ENCODE measurements at regions of chr15 and their contacts with region 1.

Region 1: DNA sequence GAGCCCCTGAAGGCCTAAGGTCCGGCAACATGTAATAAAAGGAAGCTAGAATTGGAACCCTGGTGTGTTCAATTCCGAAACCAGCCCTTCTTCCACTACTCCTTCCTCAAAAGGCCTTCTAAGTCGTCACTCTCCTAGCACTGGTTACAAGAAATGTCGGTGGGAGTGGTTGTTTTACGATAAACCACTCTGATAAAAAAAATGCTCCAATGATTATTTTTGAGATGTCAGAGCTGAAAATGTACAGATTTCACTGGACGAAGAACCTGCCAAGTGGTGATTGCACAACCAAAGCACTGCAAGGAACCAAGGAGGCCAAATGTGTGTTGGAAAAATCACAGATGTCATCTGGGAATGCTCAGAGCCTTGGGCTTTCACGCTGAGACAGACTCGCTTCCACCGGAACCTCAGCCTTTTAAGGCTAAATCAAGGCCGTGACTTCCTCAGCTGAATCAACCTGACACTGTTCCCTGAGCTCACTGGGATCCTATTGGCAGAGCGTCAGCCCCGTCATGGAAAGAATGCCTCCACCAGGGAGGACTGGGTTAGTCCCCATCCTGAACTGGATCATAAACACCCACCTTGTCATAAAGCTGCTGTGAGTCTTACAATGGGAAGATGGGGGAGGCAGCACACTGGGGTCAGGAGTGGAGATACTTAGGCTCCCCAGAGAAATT is 108.1 kb upstream of the THBS1 start:
- DNase-seq: peak; percentile 99
- ATAC-seq: peak; percentile 93
- H3K4me3 ChIP-seq: no peak overlapping the region
- H3K27ac ChIP-seq: peak overlapping the region; percentile 99; the same call in 1 of the 2 replicates
- H3K4me1 ChIP-seq: peaks cover 15% of the 10 kb centered on the region; the same call in 1 of the 2 replicates
- H3K27me3 ChIP-seq: no peaks in the 10 kb centered on the region
- CTCF ChIP-seq: no peak
- POLR2A ChIP-seq: no peak
- RAD21 ChIP-seq: no peak

Region 2: GRCh38 chr15:38996111-38996631 is 476.6 kb before region 1 on chr15:
- CTCF ChIA-PET with region 1: no interaction called
- POLR2A ChIA-PET with region 1: no interaction called
- dilution Hi-C with region 1: no loop called
- in situ Hi-C with region 1: no loop called
- intact Hi-C with region 1: loop called (anchors 5 kb)
- DNase-seq: peak; percentile 90
- ATAC-seq: peak; percentile 74
- H3K4me3 ChIP-seq: no peak overlapping the region
- H3K27ac ChIP-seq: peak overlapping the region; percentile 99; the same call in 1 of the 2 replicates
- H3K4me1 ChIP-seq: peaks cover 28% of the 10 kb centered on the region
- H3K27me3 ChIP-seq: no peaks in the 10 kb centered on the region
- CTCF ChIP-seq: no peak
- POLR2A ChIP-seq: no peak
- RAD21 ChIP-seq: no peak

Region 3: GRCh38 chr15:39125904-39126303 is 346.9 kb before region 1 on chr15:
- CTCF ChIA-PET with region 1: no interaction called
- POLR2A ChIA-PET with region 1: no interaction called
- dilution Hi-C with region 1: no loop called
- in situ Hi-C with region 1: no loop called
- intact Hi-C with region 1: loop called (anchors 2 kb)
- DNase-seq: peak; percentile 68
- ATAC-seq: no peak
- H3K4me3 ChIP-seq: no peak overlapping the region
- H3K27ac ChIP-seq: peak overlapping the region; percentile 39; the same call in 1 of the 2 replicates
- H3K4me1 ChIP-seq: peaks cover 37% of the 10 kb centered on the region
- H3K27me3 ChIP-seq: no peaks in the 10 kb centered on the region
- CTCF ChIP-seq: peak; percentile 64
- POLR2A ChIP-seq: no peak
- RAD21 ChIP-seq: peak; percentile 62

Region 4: DNA sequence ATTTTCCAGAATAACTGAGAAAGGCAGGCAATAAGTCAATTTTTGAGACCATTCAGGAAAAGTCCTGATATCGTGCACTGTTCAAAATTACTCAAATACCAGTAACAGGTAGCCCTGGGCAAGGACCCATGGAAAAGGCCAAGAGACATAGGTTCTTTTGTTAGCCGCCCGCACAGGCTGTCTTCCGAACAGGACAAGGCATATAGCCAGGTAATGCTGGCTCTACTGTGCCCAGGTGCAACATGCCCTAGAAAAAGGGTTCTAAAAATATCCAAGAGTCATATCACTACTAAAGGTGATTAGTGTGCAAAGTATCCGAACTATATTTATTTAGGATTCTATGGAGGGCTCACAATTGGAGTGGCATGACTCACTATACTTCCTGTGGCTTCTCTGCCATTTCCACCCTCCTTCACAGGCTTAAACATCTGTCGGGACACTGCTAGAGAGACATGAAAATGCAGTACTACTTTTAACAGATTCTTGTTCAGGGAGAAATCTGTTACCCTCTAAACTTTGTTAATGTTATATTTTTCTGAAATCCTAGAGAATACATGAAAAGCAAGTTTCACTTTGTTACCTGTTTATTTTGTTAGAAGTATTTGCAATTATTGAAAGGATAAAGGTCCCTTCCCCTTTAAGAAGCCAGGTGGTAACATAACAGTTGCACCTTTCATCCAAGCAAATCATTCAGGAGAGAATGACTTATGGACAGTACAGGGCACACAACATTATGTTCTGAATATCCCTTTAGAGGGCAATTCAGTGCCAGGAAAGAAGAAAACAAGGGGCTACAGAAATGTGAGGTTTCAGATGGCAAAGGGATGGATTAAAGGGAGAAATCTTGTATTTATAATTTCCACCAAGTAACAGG is 185.2 kb before region 1 on chr15:
- CTCF ChIA-PET with region 1: no interaction called
- POLR2A ChIA-PET with region 1: no interaction called
- dilution Hi-C with region 1: no loop called
- in situ Hi-C with region 1: no loop called
- intact Hi-C with region 1: loop called (anchors 5 kb)
- DNase-seq: peak; percentile 73
- ATAC-seq: peak; percentile 50
- H3K4me3 ChIP-seq: no peak overlapping the region
- H3K27ac ChIP-seq: peak overlapping the region; percentile 85
- H3K4me1 ChIP-seq: peaks cover 31% of the 10 kb centered on the region
- H3K27me3 ChIP-seq: no peaks in the 10 kb centered on the region
- CTCF ChIP-seq: no peak
- POLR2A ChIP-seq: no peak
- RAD21 ChIP-seq: no peak

Region 5: DNA sequence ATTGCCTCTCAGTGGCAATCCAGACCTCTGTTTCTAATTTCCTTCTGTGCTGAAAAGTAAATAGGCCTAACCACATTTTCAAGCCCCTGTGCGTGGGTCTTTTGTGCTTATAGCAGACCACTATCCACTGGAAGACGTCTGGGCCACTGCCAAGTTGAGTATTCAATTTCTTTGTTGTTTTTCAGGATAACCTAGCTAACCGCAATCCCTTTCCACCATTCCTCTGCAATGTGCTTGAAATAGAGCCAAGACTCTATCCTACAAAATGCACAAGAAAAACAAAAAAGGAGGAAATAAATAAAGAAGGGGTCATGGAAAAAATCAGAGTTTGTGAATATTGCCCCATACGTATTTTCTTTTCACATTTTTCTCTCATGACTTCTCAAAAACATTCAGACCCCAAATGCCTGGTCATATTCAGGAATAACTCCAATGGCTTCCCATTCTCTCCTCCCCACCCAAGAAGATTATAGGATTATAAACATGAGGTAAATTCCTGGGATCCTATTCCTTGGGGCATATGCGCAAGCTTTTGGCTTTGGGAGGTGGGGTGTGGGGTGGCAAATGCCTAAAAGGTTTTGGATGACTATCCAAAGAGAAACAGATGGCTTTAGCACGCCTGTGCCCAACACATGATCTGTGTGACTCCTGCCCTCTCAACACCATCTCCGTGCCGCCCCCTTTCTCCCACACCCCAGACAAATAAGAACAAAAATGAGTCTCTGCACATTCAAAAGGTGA is 109.8 kb before region 1 on chr15:
- CTCF ChIA-PET with region 1: interaction called, 3 read pairs
- POLR2A ChIA-PET with region 1: no interaction called
- dilution Hi-C with region 1: no loop called
- in situ Hi-C with region 1: no loop called
- intact Hi-C with region 1: loop called (anchors 2 kb)
- DNase-seq: peak; percentile 96
- ATAC-seq: peak; percentile 61
- H3K4me3 ChIP-seq: no peak overlapping the region
- H3K27ac ChIP-seq: peak overlapping the region; percentile 78; the same call in 1 of the 2 replicates
- H3K4me1 ChIP-seq: peaks cover 16% of the 10 kb centered on the region
- H3K27me3 ChIP-seq: no peaks in the 10 kb centered on the region
- CTCF ChIP-seq: no peak
- POLR2A ChIP-seq: no peak
- RAD21 ChIP-seq: no peak